Activated T-helper 2 cell treated with anti-CD3 and anti-CD28 coated beads, Interferon-gamma antibody, Interleukin-2, Interleukin-4, amounts not matched to agents 10 μg/mL and 5 μg/mL and 100 μg/mL, durations not matched to agents 14 hours and 24 hours and 36 hours (primary cell): ENCODE measurements at regions of chr11 and their contacts with region 1.

Region 1: GRCh38 chr11:124070915-124071635 is 29.9 kb upstream of the OR10G7 start:
- DNase-seq: peak; percentile 43
- H3K4me3 Mint-ChIP-seq: peak overlapping the region; percentile 0
- H3K27ac Mint-ChIP-seq: no peak overlapping the region
- H3K4me1 Mint-ChIP-seq: peaks cover 24% of the 10 kb centered on the region
- H3K27me3 Mint-ChIP-seq: peaks cover 28% of the 10 kb centered on the region

Region 2: GRCh38 chr11:124114942-124115781 is 44.1 kb after region 1 on chr11 and contains the start of gene VWA5A:
- intact Hi-C with region 1: loop called (anchors 2 kb)
- DNase-seq: peak; percentile 66
- H3K4me3 Mint-ChIP-seq: peak within 1 kb of the TSS; percentile 86
- H3K27ac Mint-ChIP-seq: peak within 1 kb of the TSS; percentile 67
- H3K4me1 Mint-ChIP-seq: peaks cover 26% of the 10 kb centered on the region
- H3K27me3 Mint-ChIP-seq: peaks cover 19% of the 10 kb centered on the region
- total RNA-seq, gene VWA5A: 4.6 TPM in 2 replicates

Region 3: GRCh38 chr11:124194698-124195410 is 123.8 kb after region 1 on chr11:
- intact Hi-C with region 1: loop called (anchors 1 kb)
- DNase-seq: no peak
- H3K4me3 Mint-ChIP-seq: no peak overlapping the region
- H3K27ac Mint-ChIP-seq: no peak overlapping the region
- H3K4me1 Mint-ChIP-seq: no peaks in the 10 kb centered on the region
- H3K27me3 Mint-ChIP-seq: peaks cover 19% of the 10 kb centered on the region

Region 4: DNA sequence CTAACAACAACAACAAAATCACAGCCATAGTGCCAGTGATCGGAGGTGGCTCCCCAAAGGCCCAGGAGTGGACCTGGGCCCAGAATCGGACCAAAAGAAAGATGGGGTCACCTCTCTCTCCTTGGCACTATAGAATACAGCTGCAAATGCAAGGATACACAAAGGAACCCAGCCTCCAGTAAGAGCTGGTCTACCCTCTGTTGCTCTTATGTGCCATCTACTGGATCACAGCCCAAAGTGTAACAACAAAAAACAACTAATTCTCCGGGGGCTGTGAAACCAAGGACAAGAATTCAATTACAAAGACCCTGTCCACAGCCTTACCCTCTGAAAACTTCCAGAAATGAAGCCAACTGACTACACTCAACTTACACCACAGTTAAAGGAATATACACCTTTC is 206.7 kb after region 1 on chr11:
- intact Hi-C with region 1: loop called (anchors 1 kb)
- DNase-seq: no peak
- H3K4me3 Mint-ChIP-seq: no peak overlapping the region
- H3K27ac Mint-ChIP-seq: no peak overlapping the region
- H3K4me1 Mint-ChIP-seq: peaks cover 16% of the 10 kb centered on the region
- H3K27me3 Mint-ChIP-seq: peaks cover 28% of the 10 kb centered on the region

Region 5: DNA sequence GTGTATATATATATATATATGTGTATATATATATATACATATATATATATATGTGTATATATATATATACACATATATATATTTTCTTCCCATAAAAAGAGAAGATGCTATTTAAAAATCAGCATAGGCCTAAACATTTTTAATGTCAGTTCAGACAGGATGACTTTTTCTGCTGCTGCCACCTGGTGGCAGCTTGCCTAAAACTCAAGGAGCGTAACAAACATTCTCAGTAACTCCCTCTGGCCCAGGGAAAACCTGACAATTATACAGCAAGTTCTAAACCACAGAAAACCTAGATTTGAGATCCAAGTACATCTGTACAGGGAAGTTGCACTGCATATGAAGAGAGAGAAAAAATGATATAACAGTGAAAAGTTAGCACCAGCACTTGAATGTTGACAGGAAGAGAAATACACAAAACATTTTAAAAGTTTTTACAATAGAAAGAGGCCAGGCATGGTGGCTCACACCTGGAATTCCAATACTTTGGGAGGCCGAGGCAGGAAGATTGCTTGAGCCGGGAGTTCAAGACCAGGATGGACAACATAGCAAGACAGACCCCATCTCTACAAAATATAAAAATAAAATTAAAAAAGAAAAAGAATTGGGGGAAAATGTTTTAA is 515.3 kb after region 1 on chr11:
- intact Hi-C with region 1: loop called (anchors 1 kb)
- DNase-seq: no peak
- H3K4me3 Mint-ChIP-seq: no peak overlapping the region
- H3K27ac Mint-ChIP-seq: no peak overlapping the region
- H3K4me1 Mint-ChIP-seq: no peaks in the 10 kb centered on the region
- H3K27me3 Mint-ChIP-seq: peaks cover 14% of the 10 kb centered on the region